ENCODE measurements at regions of chr18 and their contacts with region 1.

Region 1: DNA sequence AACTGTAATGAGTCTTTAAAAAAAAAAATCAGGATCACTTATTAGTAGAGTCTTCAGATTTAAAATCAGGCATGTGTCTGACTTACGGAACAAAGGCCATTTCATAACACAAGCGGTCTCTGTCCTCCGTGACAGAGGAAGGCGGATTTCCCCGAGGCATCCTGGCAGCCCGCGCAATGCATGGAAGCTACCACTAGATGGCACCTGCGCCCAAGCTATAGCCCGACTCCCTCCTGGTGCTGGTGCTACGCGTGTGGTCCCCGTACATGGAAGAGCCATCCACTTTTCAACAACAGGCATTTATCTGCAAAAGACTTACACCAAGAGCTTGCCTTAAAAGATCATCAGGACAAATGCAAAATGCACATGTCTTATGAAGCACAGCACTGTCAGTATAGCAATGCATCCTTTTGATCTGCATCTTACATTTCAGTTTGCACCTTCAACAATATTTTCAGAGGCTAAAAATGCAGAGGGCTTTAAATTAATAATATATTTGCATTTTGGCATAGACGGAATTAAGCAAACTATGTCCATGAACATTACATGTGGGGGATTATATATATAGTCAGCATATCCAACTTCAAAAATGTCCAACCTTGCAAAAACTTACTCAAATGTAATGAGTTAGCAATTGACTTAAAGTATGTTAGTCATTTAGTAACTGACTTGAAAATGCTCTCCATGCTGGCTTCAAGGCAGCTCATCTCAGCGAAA is 96.0 kb downstream of the ZNF516 start:
- DNase-seq: peak; percentile 77 to 98 (median 92)

Region 2: GRCh38 chr18:76314015-76314414 is 85.0 kb before region 1 on chr18:
- intact Hi-C with region 1: no loop called
- DNase-seq: no peak

Region 3: DNA sequence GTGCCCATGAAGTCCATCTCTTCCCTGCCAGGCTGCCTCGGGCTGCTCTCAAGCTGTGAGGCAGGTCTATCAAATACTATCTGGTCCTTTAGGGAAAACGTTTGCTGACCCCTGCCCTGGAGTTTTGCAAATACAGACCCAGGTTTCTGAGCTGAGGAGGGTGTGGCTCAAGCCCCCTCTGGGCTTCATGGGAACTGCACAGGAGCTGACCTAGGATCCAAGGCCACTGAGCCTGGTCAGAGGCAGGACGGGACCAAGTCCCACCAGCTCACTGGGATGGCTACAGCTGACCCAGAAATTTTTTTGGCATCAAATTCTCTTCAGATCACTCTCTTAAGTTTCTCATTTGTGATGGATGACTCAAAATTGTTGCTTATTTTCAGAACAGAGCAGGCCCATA is 81.9 kb after region 1 on chr18:
- intact Hi-C with region 1: loop called (anchors 10 kb)
- DNase-seq: peak in 1 of 10 donors; percentile 57

Region 4: DNA sequence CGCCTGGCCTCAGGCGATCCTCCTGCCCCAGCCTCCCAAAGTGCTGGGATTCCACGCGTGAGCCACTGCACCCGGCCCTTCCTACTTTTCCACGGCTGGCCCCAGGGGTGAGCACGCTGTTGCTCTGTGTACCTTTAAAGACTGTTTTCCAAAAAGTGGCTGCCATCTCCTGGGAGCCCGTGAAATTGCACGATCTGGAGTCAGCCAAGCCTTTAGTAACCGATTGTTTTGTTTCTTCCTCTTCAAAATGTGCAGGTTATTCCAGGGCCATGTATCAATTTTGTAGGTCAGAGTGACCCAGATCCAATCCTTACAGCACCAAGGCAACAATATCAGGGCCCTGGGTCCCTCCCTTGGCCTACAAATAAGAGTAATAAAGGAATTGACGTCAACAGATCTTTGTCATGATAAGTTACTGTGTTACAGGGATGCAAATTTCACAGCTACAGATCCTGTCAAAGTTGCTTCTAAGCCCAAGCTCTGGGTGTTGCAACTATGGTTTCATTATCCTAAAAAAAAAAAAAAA is 287.7 kb after region 1 on chr18:
- intact Hi-C with region 1: loop called (anchors 5 kb)
- DNase-seq: peak in 8 of 10 donors; percentile 32 to 88 (median 50)

Region 5: DNA sequence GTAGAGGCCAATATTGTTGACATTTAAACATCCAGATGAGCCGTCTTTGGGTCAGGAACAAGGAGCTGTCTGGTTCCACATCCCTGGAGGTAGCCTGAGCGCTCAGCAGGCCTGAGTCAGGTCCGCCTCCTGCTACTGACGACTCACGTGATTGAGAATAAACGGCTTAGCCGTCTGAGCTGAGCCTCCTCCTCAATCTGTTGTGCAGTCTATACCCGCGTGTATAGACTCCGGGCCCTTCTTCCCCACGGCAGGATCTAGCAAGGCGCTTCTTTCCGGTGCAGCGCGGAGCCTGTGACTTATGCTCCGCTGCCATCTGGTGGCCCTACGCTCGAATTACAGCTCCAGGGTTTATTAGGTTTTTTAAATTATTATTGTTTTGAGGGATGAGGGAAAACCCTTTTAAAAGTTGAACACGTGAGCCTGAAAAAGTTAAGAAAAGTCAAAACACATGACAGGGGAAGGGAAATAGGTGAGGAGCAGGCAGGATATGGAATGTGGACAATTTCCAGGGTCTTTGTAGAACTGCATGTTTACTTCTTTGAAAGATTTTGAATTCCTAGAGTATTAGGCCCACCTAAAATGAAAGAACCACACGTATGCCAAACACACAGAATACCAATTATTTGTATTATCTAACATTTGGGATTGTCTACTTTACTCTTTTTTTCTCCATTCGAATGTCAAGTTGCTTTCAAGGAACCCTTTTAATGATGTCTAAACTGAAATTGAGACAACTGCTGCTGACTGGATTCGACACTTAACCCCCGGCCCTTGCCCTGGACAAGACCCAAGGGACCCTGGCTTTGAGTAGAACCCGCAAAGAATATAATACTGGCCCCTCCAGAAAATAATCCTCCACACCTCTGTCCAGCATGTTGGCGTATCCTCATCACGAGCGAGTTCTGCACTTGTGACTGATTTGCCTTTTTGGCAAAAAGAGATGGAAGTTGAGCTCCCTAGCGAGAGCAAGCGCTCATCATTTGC is 310.9 kb after region 1 on chr18:
- intact Hi-C with region 1: loop called (anchors 1 kb)
- DNase-seq: peak; percentile 26 to 94 (median 66)

Region 6: GRCh38 chr18:76875390-76876325 is 476.6 kb after region 1 on chr18:
- intact Hi-C with region 1: no loop called
- DNase-seq: peak in 5 of 10 donors; percentile 49 to 85 (median 52)